GM12878 (cell line): ENCODE measurements at regions of chr1 and their contacts with region 1.

Region 1: GRCh38 chr1:48202030-48202752 is 20.3 kb upstream of the SLC5A9 start:
- DNase-seq: no peak
- ATAC-seq: peak; percentile 83
- H3K4me3 ChIP-seq: no peak overlapping the region
- H3K27ac ChIP-seq: no peak overlapping the region
- H3K4me1 ChIP-seq: no peaks in the 10 kb centered on the region
- H3K27me3 ChIP-seq: no peaks in the 10 kb centered on the region
- CTCF ChIP-seq: peak; percentile 75 to 82 (median 79)
- EP300 ChIP-seq: no peak
- POLR2A ChIP-seq: no peak
- RAD21 ChIP-seq: peak; percentile 67

Region 2: GRCh38 chr1:47997289-47998200 is 204.6 kb before region 1 on chr1 and contains the start of gene TRABD2B:
- CTCF ChIA-PET with region 1: no interaction called
- POLR2A ChIA-PET with region 1: no interaction called
- RAD21 ChIA-PET with region 1: interaction called, 3 read pairs
- SMC1A ChIA-PET with region 1: no interaction called
- in situ Hi-C with region 1: no loop called
- intact Hi-C with region 1: loop called (anchors 5 kb)
- DNase-seq: no peak
- ATAC-seq: peak; percentile 95
- H3K4me3 ChIP-seq: no peak within 1 kb of the TSS
- H3K27ac ChIP-seq: no peak within 1 kb of the TSS
- H3K4me1 ChIP-seq: no peaks in the 10 kb centered on the region
- H3K27me3 ChIP-seq: peaks cover 0 to 7% of the 10 kb centered on the region in 2 experiments; a peak in 3 of 4 replicates
- CTCF ChIP-seq: peak; percentile 75 to 93 (median 79)
- EP300 ChIP-seq: no peak
- POLR2A ChIP-seq: no peak
- RAD21 ChIP-seq: peak; percentile 59
- polyA plus RNA-seq, gene TRABD2B: not detected

Region 3: GRCh38 chr1:48093696-48094528 is 108.3 kb before region 1 on chr1:
- CTCF ChIA-PET with region 1: interaction called, 14 read pairs
- POLR2A ChIA-PET with region 1: no interaction called
- RAD21 ChIA-PET with region 1: no interaction called
- SMC1A ChIA-PET with region 1: interaction called, 3 read pairs
- in situ Hi-C with region 1: loop called (anchors 5 kb)
- intact Hi-C with region 1: loop called (anchors 1 kb)
- DNase-seq: no peak
- ATAC-seq: peak; percentile 95
- H3K4me3 ChIP-seq: no peak overlapping the region
- H3K27ac ChIP-seq: no peak overlapping the region
- H3K4me1 ChIP-seq: no peaks in the 10 kb centered on the region
- H3K27me3 ChIP-seq: no peaks in the 10 kb centered on the region; a peak in 1 of 4 replicates
- CTCF ChIP-seq: peak; percentile 75 to 93 (median 88)
- EP300 ChIP-seq: no peak
- POLR2A ChIP-seq: no peak
- RAD21 ChIP-seq: peak; percentile 62

Region 4: GRCh38 chr1:48109390-48110013 is 92.7 kb before region 1 on chr1:
- CTCF ChIA-PET with region 1: interaction called, 100 read pairs
- POLR2A ChIA-PET with region 1: no interaction called
- RAD21 ChIA-PET with region 1: interaction called, 28 read pairs
- SMC1A ChIA-PET with region 1: interaction called, 27 read pairs
- in situ Hi-C with region 1: no loop called
- intact Hi-C with region 1: loop called (anchors 1 kb)
- DNase-seq: no peak
- ATAC-seq: peak; percentile 63
- H3K4me3 ChIP-seq: no peak overlapping the region
- H3K27ac ChIP-seq: no peak overlapping the region
- H3K4me1 ChIP-seq: no peaks in the 10 kb centered on the region
- H3K27me3 ChIP-seq: no peaks in the 10 kb centered on the region
- CTCF ChIP-seq: peak; percentile 71 to 83 (median 78); a peak in 5 of 6 replicates
- EP300 ChIP-seq: no peak
- POLR2A ChIP-seq: no peak
- RAD21 ChIP-seq: peak; percentile 85

Region 5: DNA sequence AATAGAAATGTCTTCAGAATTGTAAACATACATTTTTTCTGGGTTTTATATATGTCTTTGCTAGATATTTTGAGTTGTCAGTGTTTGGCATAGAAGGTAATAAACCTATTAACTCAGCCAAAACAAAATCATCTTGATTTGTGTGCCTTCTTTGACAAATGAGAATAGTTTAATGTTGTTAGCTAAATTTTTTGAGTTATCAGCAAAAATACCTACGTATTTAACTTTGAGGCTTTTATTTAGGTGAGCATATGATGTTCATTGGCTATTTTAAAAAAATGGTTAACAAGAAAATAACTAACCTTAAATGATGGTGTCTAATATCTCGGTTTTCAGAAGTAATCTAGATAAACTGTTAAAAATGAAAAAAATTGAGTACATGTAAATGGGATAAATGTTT is 62.9 kb before region 1 on chr1:
- CTCF ChIA-PET with region 1: no interaction called
- POLR2A ChIA-PET with region 1: no interaction called
- RAD21 ChIA-PET with region 1: no interaction called
- SMC1A ChIA-PET with region 1: no interaction called
- in situ Hi-C with region 1: no loop called
- intact Hi-C with region 1: no loop called
- DNase-seq: no peak
- ATAC-seq: no peak
- H3K4me3 ChIP-seq: no peak overlapping the region
- H3K27ac ChIP-seq: no peak overlapping the region
- H3K4me1 ChIP-seq: no peaks in the 10 kb centered on the region
- H3K27me3 ChIP-seq: no peaks in the 10 kb centered on the region
- CTCF ChIP-seq: no peak
- EP300 ChIP-seq: no peak
- POLR2A ChIP-seq: no peak
- RAD21 ChIP-seq: no peak

Region 6: GRCh38 chr1:48214820-48215219 is 12.6 kb after region 1 on chr1:
- CTCF ChIA-PET with region 1: interaction called, 12 read pairs
- POLR2A ChIA-PET with region 1: no interaction called
- RAD21 ChIA-PET with region 1: no interaction called
- SMC1A ChIA-PET with region 1: no interaction called
- in situ Hi-C with region 1: no loop called
- intact Hi-C with region 1: no loop called
- DNase-seq: no peak
- ATAC-seq: no peak
- H3K4me3 ChIP-seq: no peak overlapping the region
- H3K27ac ChIP-seq: no peak overlapping the region
- H3K4me1 ChIP-seq: no peaks in the 10 kb centered on the region
- H3K27me3 ChIP-seq: no peaks in the 10 kb centered on the region; a peak in 1 of 4 replicates
- CTCF ChIP-seq: no peak
- EP300 ChIP-seq: no peak
- POLR2A ChIP-seq: no peak
- RAD21 ChIP-seq: no peak